H1 (cell line): ENCODE measurements at regions of chr10 and their contacts with region 1.

Region 1: DNA sequence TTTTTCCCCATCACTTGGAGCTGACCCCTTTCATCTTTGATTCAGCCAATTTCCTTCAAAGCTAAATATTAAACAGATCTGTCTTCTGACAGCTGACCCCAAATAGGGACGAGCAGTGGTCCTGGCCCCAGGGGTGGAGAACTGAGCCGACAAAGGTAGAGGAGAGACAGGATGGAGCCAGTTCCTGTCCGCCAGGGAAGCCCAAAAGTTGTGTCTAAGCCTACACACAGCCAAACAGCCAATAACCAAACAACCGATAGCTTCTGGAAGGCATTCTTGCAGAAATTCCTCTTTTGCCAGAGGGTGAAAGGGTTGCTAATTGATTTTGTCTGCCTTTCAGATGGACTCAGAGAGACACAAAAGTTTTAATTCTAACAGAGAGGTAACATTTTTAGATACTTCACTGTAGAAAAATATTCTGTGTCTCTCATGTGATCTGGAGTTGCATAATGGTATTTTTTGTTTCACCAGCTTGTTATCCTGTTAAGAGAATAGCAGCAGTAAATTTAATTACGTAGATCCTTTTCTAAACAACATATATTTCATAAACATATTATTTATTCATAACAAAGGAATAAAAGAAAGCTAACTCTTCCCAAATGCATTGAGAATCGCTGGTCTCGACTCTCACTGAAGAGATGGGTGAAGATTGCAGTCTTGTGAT is 161.7 kb upstream of the LYZL1 start:
- DNase-seq: no peak
- H3K4me3 ChIP-seq: no peak overlapping the region
- H3K27ac ChIP-seq: no peak overlapping the region
- H3K4me1 ChIP-seq: peaks cover 0 to 5% (median 0%) of the 10 kb centered on the region in 4 experiments; a peak in 2 of 7 replicates
- H3K27me3 ChIP-seq: no peaks in the 10 kb centered on the region
- CTCF ChIP-seq: no peak
- EP300 ChIP-seq: no peak
- POLR2A ChIP-seq: no peak
- RAD21 ChIP-seq: no peak

Region 2: DNA sequence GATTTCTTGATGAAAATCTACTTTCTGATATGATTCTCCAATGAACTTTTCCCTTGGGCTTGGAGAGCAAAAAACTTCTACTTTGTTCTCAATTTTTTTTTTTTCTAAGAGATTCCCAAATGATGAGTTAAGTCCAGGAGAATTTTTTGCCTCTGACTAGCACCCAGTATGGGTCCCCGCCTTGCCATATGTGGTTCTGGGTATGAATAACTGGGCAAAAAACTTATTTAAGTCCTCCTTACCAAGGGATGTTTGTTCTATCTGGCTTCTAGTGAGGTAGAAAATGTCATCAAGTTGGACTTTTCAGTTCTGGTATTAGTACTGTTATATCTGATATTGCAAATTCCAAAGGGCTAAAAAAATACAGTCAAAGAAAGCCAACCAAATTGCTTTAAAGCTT is 13.9 kb after region 1 on chr10:
- CTCF ChIA-PET with region 1: interaction called, 11 read pairs
- POLR2A ChIA-PET with region 1: interaction called, 4 read pairs
- DNase-seq: no peak
- H3K4me3 ChIP-seq: no peak overlapping the region; a peak in 1 of 8 replicates
- H3K27ac ChIP-seq: no peak overlapping the region
- H3K4me1 ChIP-seq: peaks cover 4 to 15% (median 8%) of the 10 kb centered on the region in 4 experiments; a peak in 4 of 7 replicates
- H3K27me3 ChIP-seq: no peaks in the 10 kb centered on the region
- CTCF ChIP-seq: no peak
- EP300 ChIP-seq: no peak
- POLR2A ChIP-seq: no peak
- RAD21 ChIP-seq: no peak

Region 3: DNA sequence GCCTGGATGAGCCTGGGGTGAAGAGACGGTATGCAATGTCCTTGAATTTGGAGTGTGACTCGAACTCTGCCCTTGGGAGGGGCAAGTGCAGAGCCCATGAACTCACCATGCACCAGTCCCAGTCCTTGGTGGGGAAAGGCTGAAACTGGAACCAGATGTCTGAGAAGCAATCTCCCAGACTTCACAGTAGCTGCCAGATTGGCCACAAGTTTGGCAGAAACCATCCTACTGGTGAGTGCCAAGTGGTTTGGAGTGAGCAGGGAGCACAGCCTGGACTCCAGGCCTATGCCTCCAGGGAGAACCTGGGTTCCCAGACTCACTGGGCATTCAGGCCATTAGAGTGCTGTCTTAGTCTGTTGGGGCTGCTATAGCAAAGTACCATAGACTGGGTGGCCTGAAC is 62.1 kb after region 1 on chr10:
- CTCF ChIA-PET with region 1: no interaction called
- POLR2A ChIA-PET with region 1: no interaction called
- DNase-seq: no peak
- H3K4me3 ChIP-seq: no peak overlapping the region
- H3K27ac ChIP-seq: no peak overlapping the region
- H3K4me1 ChIP-seq: no peaks in the 10 kb centered on the region; a peak in 1 of 7 replicates
- H3K27me3 ChIP-seq: no peaks in the 10 kb centered on the region
- CTCF ChIP-seq: no peak
- EP300 ChIP-seq: no peak
- POLR2A ChIP-seq: no peak
- RAD21 ChIP-seq: no peak

Region 4: DNA sequence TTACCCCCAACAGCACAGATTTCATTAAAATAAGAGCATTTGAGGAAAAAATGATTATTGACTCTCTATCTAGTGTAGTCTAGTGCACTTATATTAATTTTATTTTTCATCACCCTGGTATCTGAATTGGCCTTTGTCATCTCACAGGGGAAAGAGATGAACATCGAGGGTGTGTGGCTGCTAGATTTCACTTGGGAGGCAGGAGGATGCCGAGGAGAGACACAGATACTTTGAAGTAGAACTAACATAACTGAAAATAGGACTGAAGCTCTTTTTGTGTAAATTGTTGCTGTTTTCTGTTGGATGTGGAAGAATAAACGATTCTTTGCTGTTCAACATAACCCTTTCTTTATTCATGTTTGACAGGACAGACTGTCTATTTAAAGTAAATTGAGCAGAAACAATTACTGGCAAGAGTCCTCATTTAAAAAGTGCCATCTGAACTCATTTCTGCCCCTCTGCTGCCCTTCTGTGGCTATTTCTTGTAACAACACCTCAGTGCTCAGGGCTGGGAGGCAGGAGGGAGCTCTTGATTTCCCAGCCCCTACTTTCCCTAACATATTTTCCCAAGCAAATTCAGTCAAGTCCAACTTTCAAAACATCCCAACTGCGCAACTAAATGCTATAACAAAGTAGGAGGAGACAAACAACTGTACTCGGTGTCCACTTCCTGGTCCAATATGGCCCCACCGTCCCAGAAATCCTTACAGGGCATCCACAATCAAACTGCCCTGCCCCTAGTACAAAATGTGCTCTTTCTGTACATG is 177.3 kb after region 1 on chr10:
- CTCF ChIA-PET with region 1: interaction called, 14 read pairs
- POLR2A ChIA-PET with region 1: no interaction called
- DNase-seq: peak; percentile 15 to 68
- H3K4me3 ChIP-seq: no peak overlapping the region
- H3K27ac ChIP-seq: no peak overlapping the region
- H3K4me1 ChIP-seq: peaks cover 0 to 5% (median 1%) of the 10 kb centered on the region in 4 experiments; a peak in 3 of 7 replicates
- H3K27me3 ChIP-seq: no peaks in the 10 kb centered on the region
- CTCF ChIP-seq: peak; percentile 57 to 84 (median 79)
- EP300 ChIP-seq: no peak
- POLR2A ChIP-seq: no peak
- RAD21 ChIP-seq: peak; percentile 94